HepG2 (cell line): ENCODE measurements at regions of chr5 and their contacts with region 1.

Region 1: DNA sequence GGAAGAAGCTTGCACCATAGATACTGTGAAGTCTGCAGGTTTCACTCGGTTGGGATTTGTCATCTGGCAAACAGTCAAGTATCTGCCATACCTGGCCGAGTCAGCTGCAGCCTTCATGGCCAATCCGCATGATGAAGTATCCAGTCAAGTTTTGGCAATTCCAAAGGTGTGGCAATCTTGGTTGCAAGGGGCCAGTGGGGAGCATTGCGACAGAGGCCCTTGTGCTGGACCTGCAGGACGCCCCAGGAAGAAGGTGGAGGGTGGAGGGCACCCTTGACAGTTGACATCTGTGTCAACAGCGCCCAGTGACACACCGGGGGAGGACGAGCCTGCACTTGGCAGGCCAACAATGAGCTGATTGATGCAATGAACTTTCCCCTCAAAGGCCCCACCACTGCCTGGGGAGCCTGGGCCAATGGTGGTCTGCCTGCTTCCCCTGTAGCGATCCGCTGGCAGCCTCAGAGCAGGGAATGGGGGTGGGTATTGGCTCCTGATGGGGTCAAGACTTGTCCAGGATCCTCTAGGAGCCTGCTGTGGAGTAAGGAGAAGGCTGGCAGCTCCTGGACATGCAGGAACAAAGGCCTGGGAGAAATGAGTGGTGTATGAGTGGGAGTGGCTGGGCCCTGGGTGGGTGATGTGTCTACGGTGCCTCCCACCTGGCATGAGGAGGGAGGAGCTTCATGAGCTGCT is 122.8 kb upstream of the PITX1 start:
- DNase-seq: peak; percentile 98
- ATAC-seq: peak; percentile 95
- H3K4me3 ChIP-seq: peak overlapping the region; percentile 24 to 68 (median 25); a peak in 5 of 6 replicates
- H3K27ac ChIP-seq: peak overlapping the region; percentile 97
- H3K4me1 ChIP-seq: peaks cover 79% of the 10 kb centered on the region
- H3K27me3 ChIP-seq: no peaks in the 10 kb centered on the region
- CTCF ChIP-seq: peak; percentile 24; the same call in 1 of the 2 replicates
- EP300 ChIP-seq: peak; percentile 91 to 97
- POLR2A ChIP-seq: peak; percentile 51 to 83
- RAD21 ChIP-seq: 0 out of 2 replicates have a peak, but pooled peaks have one; percentile 36

Region 2: DNA sequence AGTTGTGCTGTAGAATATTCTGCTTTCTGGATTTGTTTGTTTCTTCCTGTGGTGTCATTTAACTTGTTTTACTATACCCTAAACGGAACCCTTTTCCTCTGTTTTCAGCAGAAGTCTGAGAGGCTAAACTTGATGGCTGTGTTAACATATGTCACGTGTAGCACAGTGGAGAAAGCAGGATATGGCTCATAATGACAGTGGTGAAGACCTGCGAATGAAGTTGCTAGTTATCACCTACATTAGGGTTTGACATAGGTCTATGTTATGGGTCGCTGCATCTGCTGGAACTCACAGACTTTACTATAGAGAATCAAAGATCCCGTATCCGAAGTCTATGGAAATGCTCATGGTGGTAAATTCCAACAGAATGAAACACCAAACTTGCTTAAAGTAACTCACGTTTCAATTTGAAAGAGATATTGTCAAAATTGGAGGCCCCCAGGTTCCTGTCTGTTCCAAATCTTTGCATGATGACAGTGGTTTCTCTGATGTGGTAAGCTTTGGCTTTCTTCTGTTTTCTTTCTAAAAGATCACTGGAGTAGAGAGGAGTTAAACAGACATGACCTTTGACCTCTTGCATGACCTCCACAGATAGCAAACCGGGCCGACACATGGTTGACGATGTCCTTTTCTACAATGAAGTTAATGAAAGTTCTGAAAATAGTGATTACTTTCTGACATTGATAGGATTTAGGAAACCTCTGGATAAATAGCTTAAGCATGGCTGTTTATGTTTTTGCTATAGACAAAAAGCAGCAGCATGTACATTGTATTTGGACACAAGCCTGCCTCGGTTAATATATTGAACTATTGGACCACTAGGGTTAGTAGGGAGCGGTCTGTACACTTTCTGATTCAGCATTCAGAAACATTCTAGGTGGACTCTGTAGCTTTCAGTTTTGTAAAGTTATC is 192.2 kb before region 1 on chr5:
- CTCF ChIA-PET with region 1: no interaction called
- POLR2A ChIA-PET with region 1: interaction called, 10 read pairs
- in situ Hi-C with region 1: no loop called
- intact Hi-C with region 1: no loop called
- DNase-seq: peak; percentile 92
- ATAC-seq: peak; percentile 83
- H3K4me3 ChIP-seq: peak overlapping the region in 2 of 3 experiments; percentile 10 to 35; a peak in 3 of 6 replicates
- H3K27ac ChIP-seq: peak overlapping the region; percentile 65
- H3K4me1 ChIP-seq: peaks cover 35% of the 10 kb centered on the region
- H3K27me3 ChIP-seq: no peaks in the 10 kb centered on the region
- CTCF ChIP-seq: no peak
- EP300 ChIP-seq: peak in 1 of 2 experiments; percentile 91; a peak in 2 of 4 replicates
- POLR2A ChIP-seq: no peak
- RAD21 ChIP-seq: no peak

Region 3: DNA sequence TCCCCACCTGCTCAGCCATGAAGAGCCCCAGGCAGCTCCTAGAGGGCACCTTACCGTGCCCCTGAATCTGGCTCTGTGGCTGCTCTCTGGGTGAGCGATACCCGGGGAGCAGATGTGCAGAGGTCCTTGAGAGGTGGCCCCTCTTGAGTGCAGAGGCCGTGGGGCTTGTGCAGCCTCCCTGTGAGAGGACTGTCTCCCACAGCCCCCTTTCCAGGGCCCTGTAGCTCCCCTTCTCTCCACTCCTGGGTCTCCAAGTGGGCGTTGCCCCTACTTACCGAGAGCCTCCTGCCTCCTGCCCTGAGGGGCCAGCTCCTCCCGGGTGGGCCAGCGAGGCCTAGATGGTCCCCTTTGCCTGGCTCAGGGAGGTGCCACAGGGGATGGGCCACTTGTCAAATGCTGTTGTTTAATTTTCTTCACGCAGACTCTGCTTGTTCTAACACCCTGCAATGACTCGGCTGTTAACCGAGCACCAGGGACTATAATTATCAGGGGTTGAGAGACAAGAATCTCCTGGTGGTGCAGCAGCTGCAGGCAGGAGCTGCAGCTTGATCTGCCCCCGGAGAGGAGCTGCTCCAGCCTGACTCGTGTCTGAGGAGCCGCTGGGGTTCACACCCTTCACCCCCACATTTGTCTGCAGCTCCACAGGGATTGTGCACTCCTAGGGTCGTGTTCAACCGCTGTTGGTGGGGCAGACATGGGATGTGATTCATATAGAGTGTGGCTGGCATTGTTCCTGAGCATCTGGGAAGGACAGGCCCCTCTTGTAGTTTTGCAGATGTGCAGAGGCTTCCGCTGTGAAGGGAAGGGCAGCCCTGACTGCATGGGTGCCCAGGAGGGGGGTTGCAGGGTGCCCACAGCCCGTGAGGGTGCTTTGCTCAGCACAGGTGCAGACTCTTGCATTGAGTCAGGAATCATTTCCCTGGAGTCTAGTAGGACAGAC is 93.0 kb before region 1 on chr5:
- CTCF ChIA-PET with region 1: no interaction called
- POLR2A ChIA-PET with region 1: no interaction called
- in situ Hi-C with region 1: no loop called
- intact Hi-C with region 1: no loop called
- DNase-seq: no peak
- ATAC-seq: no peak
- H3K4me3 ChIP-seq: no peak overlapping the region
- H3K27ac ChIP-seq: no peak overlapping the region
- H3K4me1 ChIP-seq: no peaks in the 10 kb centered on the region
- H3K27me3 ChIP-seq: no peaks in the 10 kb centered on the region
- CTCF ChIP-seq: no peak
- EP300 ChIP-seq: no peak
- POLR2A ChIP-seq: no peak
- RAD21 ChIP-seq: no peak

Region 4: DNA sequence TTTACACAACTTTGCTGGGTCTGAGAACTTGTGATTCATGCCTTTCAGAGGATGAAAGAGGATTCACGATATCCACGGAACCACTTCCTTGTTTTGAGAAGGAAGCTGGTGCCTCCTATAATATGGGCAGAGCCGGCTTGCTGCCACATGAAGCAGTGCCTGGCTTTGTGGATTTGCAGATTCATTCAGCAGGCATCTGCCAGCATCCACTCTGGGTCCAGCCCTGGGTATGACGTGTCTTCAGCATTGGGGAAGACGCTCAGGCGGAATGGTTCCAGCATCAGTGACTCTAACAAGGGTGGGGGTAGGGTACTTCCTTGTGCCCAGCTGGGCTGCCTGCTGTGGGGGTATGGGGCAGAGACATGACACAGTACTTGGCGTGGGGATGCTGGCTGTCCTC is 16.1 kb before region 1 on chr5:
- CTCF ChIA-PET with region 1: no interaction called
- POLR2A ChIA-PET with region 1: interaction called, 18 read pairs
- in situ Hi-C with region 1: no loop called
- intact Hi-C with region 1: no loop called
- DNase-seq: no peak
- ATAC-seq: peak; percentile 19; the same call in 2 of the 3 replicates
- H3K4me3 ChIP-seq: no peak overlapping the region
- H3K27ac ChIP-seq: no peak overlapping the region
- H3K4me1 ChIP-seq: peaks cover 44% of the 10 kb centered on the region
- H3K27me3 ChIP-seq: no peaks in the 10 kb centered on the region
- CTCF ChIP-seq: no peak
- EP300 ChIP-seq: no peak
- POLR2A ChIP-seq: no peak
- RAD21 ChIP-seq: no peak

Region 5: GRCh38 chr5:135167634-135168033 is 10.8 kb after region 1 on chr5:
- CTCF ChIA-PET with region 1: no interaction called
- POLR2A ChIA-PET with region 1: interaction called, 13 read pairs
- in situ Hi-C with region 1: no loop called
- intact Hi-C with region 1: no loop called
- DNase-seq: no peak
- ATAC-seq: no peak
- H3K4me3 ChIP-seq: no peak overlapping the region
- H3K27ac ChIP-seq: no peak overlapping the region
- H3K4me1 ChIP-seq: no peaks in the 10 kb centered on the region
- H3K27me3 ChIP-seq: no peaks in the 10 kb centered on the region
- CTCF ChIP-seq: no peak
- EP300 ChIP-seq: no peak
- POLR2A ChIP-seq: no peak
- RAD21 ChIP-seq: no peak

Region 6: DNA sequence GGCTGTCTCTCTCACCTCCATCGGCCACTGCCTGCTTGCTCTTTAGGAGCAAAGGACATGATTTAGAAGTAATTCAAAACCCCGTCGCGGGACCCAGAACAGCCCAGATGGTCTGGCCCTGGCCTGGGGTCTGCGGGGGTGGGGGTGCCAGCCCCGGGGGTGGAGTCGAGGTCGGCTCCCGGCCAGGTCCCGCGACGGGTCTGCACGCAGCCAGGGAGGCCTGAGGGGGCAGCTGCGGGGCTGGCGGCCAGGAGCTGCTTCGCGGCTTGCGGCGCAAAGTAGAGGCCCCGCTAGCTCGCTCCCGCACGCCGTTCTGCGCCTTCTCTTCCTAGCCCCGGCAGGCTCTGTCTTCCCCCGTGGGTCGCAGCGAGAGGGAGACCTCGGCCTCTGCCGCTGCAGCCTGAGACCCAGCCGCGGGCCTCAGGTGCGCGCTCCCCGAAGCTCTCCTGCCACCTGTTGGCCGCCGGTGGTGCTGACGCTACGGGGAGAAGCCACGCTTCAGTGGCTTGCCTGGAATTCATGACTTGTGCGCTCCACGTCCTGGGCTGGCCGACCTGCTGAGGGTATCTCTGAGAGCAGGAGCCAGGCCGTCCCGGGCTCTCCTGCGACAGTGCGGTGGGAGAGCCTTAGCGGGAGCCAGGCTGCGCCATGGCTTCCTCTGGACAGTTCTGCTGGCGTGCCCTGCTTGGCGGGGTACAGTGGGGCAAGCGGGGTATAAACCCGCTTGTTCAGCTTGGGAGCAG is 34.4 kb after region 1 on chr5:
- CTCF ChIA-PET with region 1: no interaction called
- POLR2A ChIA-PET with region 1: interaction called, 15 read pairs
- in situ Hi-C with region 1: no loop called
- intact Hi-C with region 1: loop called (anchors 2 kb)
- DNase-seq: peak; percentile 68
- ATAC-seq: peak; percentile 98
- H3K4me3 ChIP-seq: peak overlapping the region; percentile 72 to 82 (median 76)
- H3K27ac ChIP-seq: no peak overlapping the region
- H3K4me1 ChIP-seq: peaks cover 5% of the 10 kb centered on the region; the same call in 1 of the 2 replicates
- H3K27me3 ChIP-seq: no peaks in the 10 kb centered on the region; a peak in 1 of 5 replicates
- CTCF ChIP-seq: peak; percentile 100
- EP300 ChIP-seq: no peak
- POLR2A ChIP-seq: peak in 1 of 2 experiments; percentile 44; a peak in 1 of 4 replicates
- RAD21 ChIP-seq: peak; percentile 99